ENCODE measurements at regions of chr18 and their contacts with region 1.

Region 1: DNA sequence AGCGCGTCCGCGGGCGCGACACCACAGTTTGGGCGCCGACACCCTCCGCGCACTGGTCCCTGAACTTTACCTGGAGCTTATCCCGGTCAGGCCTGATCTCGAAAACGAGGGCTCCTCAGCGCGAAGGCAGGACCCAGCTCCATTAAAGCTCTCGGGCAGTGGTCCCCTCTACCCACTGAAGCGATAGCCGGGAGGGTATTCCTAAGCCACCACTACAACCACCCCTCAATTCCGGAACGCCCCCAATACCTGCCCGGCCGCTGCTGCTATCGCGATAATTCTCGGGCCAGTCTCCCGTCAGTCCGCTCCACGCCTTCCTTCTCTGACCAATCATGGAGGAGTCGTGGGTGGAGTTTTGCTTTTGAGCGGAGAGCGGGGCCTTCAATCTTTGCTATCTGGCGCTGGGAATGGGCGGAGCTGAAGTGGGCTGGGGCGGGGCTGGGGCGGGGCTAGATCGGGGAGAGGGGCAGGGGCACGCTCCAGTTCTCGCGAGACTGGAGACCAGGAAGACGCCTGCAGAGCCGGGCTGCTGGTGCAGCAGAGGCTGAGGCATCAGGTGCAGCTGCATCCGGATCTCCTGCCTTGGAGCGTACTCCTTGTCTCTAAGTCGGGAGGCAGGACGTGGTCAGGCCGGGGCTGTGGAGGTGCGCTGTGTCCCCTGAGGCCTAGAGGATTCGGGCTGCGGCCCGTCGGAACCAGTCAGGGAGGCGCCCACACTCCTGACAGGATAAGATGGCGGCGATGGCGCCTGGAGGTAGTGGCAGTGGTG is at the starts of genes PIGN and RELCH:
- DNase-seq: peak; percentile 92
- H3K4me3 ChIP-seq: peak within 1 kb of the TSS; percentile 99
- H3K27ac ChIP-seq: peak within 1 kb of the TSS; percentile 58
- H3K4me1 ChIP-seq: peaks cover 29% of the 10 kb centered on the region
- CTCF ChIP-seq: no peak
- total RNA-seq, gene PIGN: 9.9 and 10.9 TPM in 2 replicates
- total RNA-seq, gene RELCH: 12.3 and 23.1 TPM in 2 replicates

Region 2: GRCh38 chr18:62198259-62198658 is 11.3 kb after region 1 on chr18:
- CTCF ChIA-PET with region 1: no interaction called
- POLR2A ChIA-PET with region 1: interaction called, 10 read pairs
- intact Hi-C with region 1: no loop called
- DNase-seq: no peak
- H3K4me3 ChIP-seq: no peak overlapping the region
- H3K27ac ChIP-seq: no peak overlapping the region
- H3K4me1 ChIP-seq: peaks cover 8% of the 10 kb centered on the region
- CTCF ChIP-seq: no peak

Region 3: DNA sequence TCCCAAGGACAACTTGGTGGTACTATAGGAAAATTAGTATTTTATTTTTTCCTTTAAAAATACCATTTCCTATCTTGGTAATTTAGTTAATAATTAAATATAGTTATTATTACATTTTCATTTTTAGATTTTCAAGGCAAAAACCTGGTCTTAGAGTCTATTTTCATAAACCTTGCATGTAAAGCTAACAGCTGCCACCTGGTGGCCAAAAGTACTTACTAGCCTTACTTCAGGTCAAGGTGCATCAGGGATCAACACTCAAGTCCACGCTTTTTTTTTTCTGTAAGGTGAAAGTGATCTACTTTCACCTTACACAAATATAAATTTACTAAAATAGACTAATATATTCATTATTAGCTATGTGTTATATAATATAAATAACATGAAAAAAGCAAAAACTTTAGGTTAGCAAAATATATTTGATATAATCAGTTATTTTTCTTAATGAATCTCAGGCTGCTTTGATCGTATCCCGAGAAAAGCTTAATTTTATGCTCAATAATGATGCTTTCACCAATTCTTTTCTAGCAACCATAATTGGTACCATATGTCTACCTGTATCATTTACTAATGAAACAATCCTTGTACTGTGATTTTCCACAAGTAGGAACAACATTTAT is 62.6 kb after region 1 on chr18:
- CTCF ChIA-PET with region 1: interaction called, 4 read pairs
- POLR2A ChIA-PET with region 1: interaction called, 4 read pairs
- intact Hi-C with region 1: loop called (anchors 1 kb)
- DNase-seq: peak; percentile 72
- H3K4me3 ChIP-seq: no peak overlapping the region
- H3K27ac ChIP-seq: no peak overlapping the region
- H3K4me1 ChIP-seq: no peaks in the 10 kb centered on the region
- CTCF ChIP-seq: peak; percentile 71

Region 4: DNA sequence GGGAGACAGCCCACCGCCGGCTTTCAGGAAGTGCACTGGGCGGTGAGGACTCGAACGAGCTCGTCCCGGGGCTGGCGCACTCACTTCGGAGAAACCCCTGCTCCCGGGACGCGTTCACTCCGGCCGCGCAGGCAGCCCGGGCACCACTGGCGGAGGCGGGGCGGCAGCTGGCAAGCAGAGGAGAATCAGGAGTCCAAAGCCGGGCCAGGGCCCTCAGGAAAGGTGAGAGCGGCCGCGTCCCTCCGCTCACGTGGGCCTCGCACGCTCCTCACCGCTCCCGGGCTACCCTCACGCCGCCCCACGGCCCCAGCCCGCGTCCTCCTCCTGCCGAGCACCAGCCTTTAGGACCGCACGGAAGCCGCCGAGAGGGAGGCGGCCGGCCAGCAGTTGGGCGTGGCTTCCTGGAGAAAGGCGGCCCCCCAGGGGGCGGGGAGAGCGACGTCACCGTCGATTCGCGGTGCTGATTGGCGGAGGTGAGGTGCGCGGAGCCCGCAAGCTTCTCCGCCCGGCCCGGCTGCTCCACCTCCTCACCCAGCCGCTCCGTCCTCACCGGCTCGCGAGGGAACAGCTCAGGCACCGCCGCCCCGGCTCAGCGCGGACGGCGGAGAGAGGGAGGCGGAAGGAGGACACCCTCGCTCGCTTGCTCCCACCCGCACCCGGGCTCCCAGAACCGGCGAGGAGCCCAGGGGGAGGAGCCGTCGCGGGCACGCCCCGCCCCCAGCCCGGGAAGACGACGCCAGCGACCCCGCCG is 335.7 kb after region 1 on chr18 and contains the start of gene ZCCHC2:
- CTCF ChIA-PET with region 1: no interaction called
- POLR2A ChIA-PET with region 1: no interaction called
- intact Hi-C with region 1: loop called (anchors 5 kb)
- DNase-seq: peak; percentile 90
- H3K4me3 ChIP-seq: peak within 1 kb of the TSS; percentile 87
- H3K27ac ChIP-seq: peak within 1 kb of the TSS; percentile 78
- H3K4me1 ChIP-seq: peaks cover 9% of the 10 kb centered on the region
- CTCF ChIP-seq: no peak
- total RNA-seq, gene ZCCHC2: 13.5 and 17.5 TPM in 2 replicates

Measured in OCI-LY7 (cell line).